ENCODE measurements at regions of chr1 and their contacts with region 1.

Region 1: GRCh38 chr1:24964811-24965570 is 34.9 kb upstream of the RUNX3 start:
- DNase-seq: peak; percentile 68 to 97 (median 80)
- ATAC-seq: peak; percentile 93
- H3K4me3 ChIP-seq: peak overlapping the region; percentile 55
- H3K4me3 Mint-ChIP-seq: peak overlapping the region; percentile 79
- H3K27ac ChIP-seq: peak overlapping the region; percentile 75 to 85
- H3K27ac Mint-ChIP-seq: peak overlapping the region; percentile 88
- H3K4me1 ChIP-seq: peaks cover 76% of the 10 kb centered on the region
- H3K4me1 Mint-ChIP-seq: peaks cover 63% of the 10 kb centered on the region
- H3K27me3 ChIP-seq: no peaks in the 10 kb centered on the region
- H3K27me3 Mint-ChIP-seq: no peaks in the 10 kb centered on the region
- CTCF ChIP-seq: no peak

Region 2: GRCh38 chr1:24919791-24920532 is 45.0 kb before region 1 on chr1:
- CTCF ChIA-PET with region 1: no interaction called
- POLR2A ChIA-PET with region 1: no interaction called
- intact Hi-C with region 1: no loop called
- DNase-seq: peak in 4 of 14 experiments; percentile 53 to 68 (median 54)
- ATAC-seq: no peak
- H3K4me3 ChIP-seq: peak overlapping the region; percentile 9
- H3K4me3 Mint-ChIP-seq: peak overlapping the region; percentile 68
- H3K27ac ChIP-seq: peak overlapping the region; percentile 7 to 57
- H3K27ac Mint-ChIP-seq: peak overlapping the region; percentile 98
- H3K4me1 ChIP-seq: peaks cover 97% of the 10 kb centered on the region
- H3K4me1 Mint-ChIP-seq: peaks cover 58% of the 10 kb centered on the region
- H3K27me3 ChIP-seq: no peaks in the 10 kb centered on the region
- H3K27me3 Mint-ChIP-seq: no peaks in the 10 kb centered on the region
- CTCF ChIP-seq: no peak

Region 3: DNA sequence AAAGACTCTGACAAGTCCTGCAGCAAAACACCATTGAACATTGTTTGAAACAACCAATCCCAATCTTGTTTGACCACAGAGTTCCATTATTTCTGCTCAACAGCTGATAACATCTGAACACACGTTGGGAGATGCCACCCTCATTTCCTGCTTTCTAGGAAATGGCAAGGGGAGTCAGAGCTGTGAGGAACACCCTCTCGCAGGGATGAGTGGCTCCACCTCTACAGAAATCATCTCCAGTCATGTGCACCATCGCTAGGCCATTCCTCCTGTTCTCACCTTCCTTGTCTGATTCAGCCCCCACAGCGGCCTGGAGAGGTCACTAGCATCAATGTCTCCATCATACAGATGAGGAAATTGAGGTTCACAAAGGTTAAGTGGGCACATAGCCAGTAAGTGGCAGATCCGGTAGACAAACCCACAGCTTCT is 12.6 kb before region 1 on chr1:
- CTCF ChIA-PET with region 1: interaction called, 8 read pairs
- POLR2A ChIA-PET with region 1: interaction called, 14 read pairs
- intact Hi-C with region 1: no loop called
- DNase-seq: peak in 5 of 14 experiments; percentile 34 to 77 (median 68)
- ATAC-seq: peak; percentile 17
- H3K4me3 ChIP-seq: no peak overlapping the region
- H3K4me3 Mint-ChIP-seq: peak overlapping the region; percentile 54
- H3K27ac ChIP-seq: no peak overlapping the region
- H3K27ac Mint-ChIP-seq: peak overlapping the region; percentile 19
- H3K4me1 ChIP-seq: peaks cover 54% of the 10 kb centered on the region
- H3K4me1 Mint-ChIP-seq: peaks cover 63% of the 10 kb centered on the region
- H3K27me3 ChIP-seq: no peaks in the 10 kb centered on the region
- H3K27me3 Mint-ChIP-seq: no peaks in the 10 kb centered on the region
- CTCF ChIP-seq: no peak

Region 4: DNA sequence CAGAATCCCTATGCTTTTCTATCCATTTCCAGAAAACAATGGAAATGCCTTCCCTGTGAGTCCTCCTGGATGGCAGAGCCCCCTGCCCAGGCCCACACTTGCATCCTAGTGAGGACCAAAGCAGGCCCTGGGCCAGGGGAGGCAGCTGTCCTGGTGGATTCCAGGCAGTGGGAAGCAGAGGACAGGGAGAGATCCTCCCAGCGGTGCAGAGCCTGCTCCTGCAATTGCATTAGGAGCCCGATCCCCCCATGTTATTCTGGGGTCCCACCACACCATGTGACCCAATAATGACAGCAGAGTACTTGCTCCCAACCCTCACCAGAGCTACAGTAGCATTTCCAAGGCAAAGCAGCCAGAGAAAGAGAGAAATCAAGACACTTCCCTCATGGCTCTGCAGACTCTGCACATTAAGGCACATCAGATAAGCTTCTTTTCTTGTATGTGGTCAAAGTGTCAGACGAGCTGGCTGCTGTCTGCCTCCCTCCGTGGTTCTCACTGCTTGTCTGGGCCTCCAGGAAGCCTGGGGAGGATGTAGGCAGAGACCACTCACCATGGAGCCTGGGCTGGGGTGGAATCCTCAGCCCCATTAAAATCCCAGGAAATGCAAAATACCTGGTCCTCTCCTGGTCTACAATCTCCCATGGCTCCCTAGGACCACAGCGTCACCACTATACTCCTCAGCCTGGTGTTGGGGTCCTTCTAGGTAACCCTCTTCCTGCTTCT is 20.0 kb after region 1 on chr1:
- CTCF ChIA-PET with region 1: interaction called, 4 read pairs
- POLR2A ChIA-PET with region 1: interaction called, 4 read pairs
- intact Hi-C with region 1: loop called in 1 of 2 experiments (anchors 1 kb)
- DNase-seq: peak in 7 of 14 experiments; percentile 35 to 83 (median 57)
- ATAC-seq: peak; percentile 54
- H3K4me3 ChIP-seq: no peak overlapping the region
- H3K4me3 Mint-ChIP-seq: peak overlapping the region; percentile 6
- H3K27ac ChIP-seq: no peak overlapping the region
- H3K27ac Mint-ChIP-seq: peak overlapping the region; percentile 19
- H3K4me1 ChIP-seq: peaks cover 95% of the 10 kb centered on the region
- H3K4me1 Mint-ChIP-seq: peaks cover 93% of the 10 kb centered on the region
- H3K27me3 ChIP-seq: no peaks in the 10 kb centered on the region
- H3K27me3 Mint-ChIP-seq: no peaks in the 10 kb centered on the region
- CTCF ChIP-seq: no peak

Region 5: DNA sequence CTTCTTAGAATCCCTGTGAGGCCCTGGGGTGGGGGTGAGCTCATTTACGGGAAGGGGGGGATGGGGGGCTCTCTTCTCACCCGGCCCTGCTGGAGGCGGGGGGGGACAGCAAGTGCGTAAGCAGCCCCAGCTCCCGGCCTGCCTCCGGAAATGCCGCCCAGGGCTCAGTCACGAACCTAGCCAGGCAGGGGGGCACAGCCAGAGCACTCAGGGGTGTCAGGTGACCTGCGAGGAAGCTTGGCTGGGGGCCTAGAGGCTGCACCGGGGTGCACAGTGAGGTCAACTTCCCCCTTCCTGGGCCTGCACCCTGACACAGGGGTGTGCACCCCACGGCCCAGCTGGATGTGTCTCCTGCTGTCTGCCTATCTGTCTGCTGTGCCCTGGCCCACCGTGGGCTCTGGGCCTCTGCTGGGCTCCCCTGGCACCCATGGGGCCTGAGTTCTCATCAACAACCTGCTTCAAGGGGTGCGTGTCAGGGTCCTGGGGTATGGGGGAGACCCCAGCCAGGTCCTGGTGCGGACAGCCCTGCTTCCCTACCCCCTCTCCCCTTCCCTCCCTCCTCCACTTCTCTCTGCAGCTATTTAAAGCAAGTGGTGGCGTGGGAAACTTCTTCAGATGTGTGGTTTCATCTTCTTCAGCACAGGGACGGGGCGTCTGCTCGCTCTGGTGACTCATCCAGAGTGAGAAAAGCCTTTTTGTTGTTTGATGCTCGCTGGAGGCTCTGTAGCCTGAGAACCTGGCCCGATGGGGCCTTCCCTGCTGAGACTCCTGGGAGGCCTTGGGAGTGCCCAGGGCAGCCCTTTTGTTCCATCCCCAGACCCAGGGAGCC is 57.6 kb after region 1 on chr1:
- CTCF ChIA-PET with region 1: interaction called, 6 read pairs
- POLR2A ChIA-PET with region 1: interaction called, 59 read pairs
- intact Hi-C with region 1: loop called in 1 of 2 experiments (anchors 2 kb)
- DNase-seq: peak; percentile 82 to 99 (median 95)
- ATAC-seq: peak; percentile 84
- H3K4me3 ChIP-seq: peak overlapping the region; percentile 37
- H3K4me3 Mint-ChIP-seq: peak overlapping the region; percentile 61
- H3K27ac ChIP-seq: peak overlapping the region; percentile 97 to 99
- H3K27ac Mint-ChIP-seq: peak overlapping the region; percentile 91
- H3K4me1 ChIP-seq: peaks cover 98% of the 10 kb centered on the region
- H3K4me1 Mint-ChIP-seq: peaks cover 72% of the 10 kb centered on the region
- H3K27me3 ChIP-seq: no peaks in the 10 kb centered on the region
- H3K27me3 Mint-ChIP-seq: no peaks in the 10 kb centered on the region
- CTCF ChIP-seq: no peak

Region 6: DNA sequence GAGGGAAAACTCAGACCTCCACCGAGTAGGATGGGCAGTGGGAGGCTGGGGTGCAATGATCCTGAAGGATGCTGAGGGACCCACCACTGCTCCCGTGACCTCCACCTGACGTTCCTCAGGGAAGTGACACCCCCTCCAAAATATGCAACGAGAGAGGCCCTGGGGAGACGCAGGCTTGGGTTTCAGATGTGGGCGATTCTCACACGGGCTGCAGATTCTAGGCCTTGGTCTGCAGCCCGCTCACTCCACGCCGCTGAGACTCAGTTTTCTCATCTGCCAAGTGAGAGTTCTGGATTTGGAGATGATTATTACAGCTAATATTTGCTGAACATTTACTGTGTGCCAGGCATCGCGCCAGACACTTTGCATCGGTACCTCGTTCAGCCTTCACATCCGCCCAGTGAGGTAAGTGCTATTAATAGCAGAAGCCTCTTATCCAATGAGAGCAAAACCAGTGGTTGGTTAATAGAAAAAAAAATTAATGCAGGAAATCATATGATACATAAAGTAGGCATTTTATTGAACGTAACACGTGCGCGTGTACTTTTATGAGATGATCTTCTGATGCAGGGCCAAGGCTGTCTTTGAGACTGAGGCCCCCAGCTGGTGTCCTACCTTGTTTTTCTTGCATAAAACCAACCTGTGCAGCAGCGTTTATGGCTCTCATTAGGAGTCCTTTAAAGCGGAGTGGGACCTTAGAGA is 67.1 kb after region 1 on chr1:
- CTCF ChIA-PET with region 1: interaction called, 31 read pairs
- POLR2A ChIA-PET with region 1: interaction called, 30 read pairs
- intact Hi-C with region 1: loop called (anchors 1 kb)
- DNase-seq: peak; percentile 43 to 94 (median 57)
- ATAC-seq: peak; percentile 76
- H3K4me3 ChIP-seq: no peak overlapping the region
- H3K4me3 Mint-ChIP-seq: peak overlapping the region; percentile 32
- H3K27ac ChIP-seq: peak overlapping the region; percentile 84
- H3K27ac Mint-ChIP-seq: peak overlapping the region; percentile 84
- H3K4me1 ChIP-seq: peaks cover 99% of the 10 kb centered on the region
- H3K4me1 Mint-ChIP-seq: peaks cover 71% of the 10 kb centered on the region
- H3K27me3 ChIP-seq: no peaks in the 10 kb centered on the region
- H3K27me3 Mint-ChIP-seq: no peaks in the 10 kb centered on the region
- CTCF ChIP-seq: no peak

Region 7: GRCh38 chr1:25037174-25038074 is 72.4 kb after region 1 on chr1:
- CTCF ChIA-PET with region 1: interaction called, 31 read pairs
- POLR2A ChIA-PET with region 1: interaction called, 30 read pairs
- intact Hi-C with region 1: loop called (anchors 1 kb)
- DNase-seq: peak; percentile 52 to 84 (median 63)
- ATAC-seq: peak; percentile 77
- H3K4me3 ChIP-seq: no peak overlapping the region
- H3K4me3 Mint-ChIP-seq: peak overlapping the region; percentile 4
- H3K27ac ChIP-seq: no peak overlapping the region
- H3K27ac Mint-ChIP-seq: peak overlapping the region; percentile 28
- H3K4me1 ChIP-seq: peaks cover 56% of the 10 kb centered on the region
- H3K4me1 Mint-ChIP-seq: peaks cover 30% of the 10 kb centered on the region
- H3K27me3 ChIP-seq: no peaks in the 10 kb centered on the region
- H3K27me3 Mint-ChIP-seq: no peaks in the 10 kb centered on the region
- CTCF ChIP-seq: peak; percentile 72

Region 8: DNA sequence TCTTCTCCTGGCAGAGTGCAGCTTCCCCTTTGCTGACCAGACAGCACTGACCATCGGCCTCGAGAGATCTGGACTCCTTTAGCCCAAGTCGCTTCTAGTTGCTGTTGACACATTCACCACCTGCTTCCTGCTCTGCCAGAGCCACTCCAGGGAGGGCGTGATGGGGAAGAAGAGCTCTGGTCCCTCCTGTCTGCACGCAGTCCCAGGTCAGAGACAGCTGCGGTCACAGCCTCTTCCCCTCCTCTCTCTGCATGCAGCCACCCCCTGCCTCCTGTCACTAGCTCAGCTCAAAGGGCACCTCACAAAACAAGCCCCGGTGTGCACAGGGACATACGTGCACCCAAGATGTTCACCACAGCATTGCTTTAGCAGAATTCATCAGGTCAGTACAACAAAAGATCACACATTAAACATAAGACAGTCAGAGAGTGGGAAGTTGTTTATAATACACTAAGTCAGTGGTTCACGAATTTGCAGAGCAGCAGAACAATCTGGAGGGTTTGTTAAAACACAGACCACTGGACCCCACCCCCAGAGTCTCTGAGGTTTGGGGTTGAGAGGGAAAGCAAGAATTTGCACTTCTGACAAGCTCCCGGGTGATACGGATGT is 134.5 kb after region 1 on chr1:
- CTCF ChIA-PET with region 1: interaction called, 3 read pairs
- POLR2A ChIA-PET with region 1: interaction called, 3 read pairs
- intact Hi-C with region 1: loop called in 1 of 2 experiments (anchors 5 kb)
- DNase-seq: peak in 8 of 14 experiments; percentile 6 to 74 (median 34)
- ATAC-seq: peak; percentile 55
- H3K4me3 ChIP-seq: no peak overlapping the region
- H3K4me3 Mint-ChIP-seq: peak overlapping the region; percentile 5
- H3K27ac ChIP-seq: no peak overlapping the region
- H3K27ac Mint-ChIP-seq: peak overlapping the region; percentile 24
- H3K4me1 ChIP-seq: peaks cover 66% of the 10 kb centered on the region
- H3K4me1 Mint-ChIP-seq: peaks cover 66% of the 10 kb centered on the region
- H3K27me3 ChIP-seq: no peaks in the 10 kb centered on the region
- H3K27me3 Mint-ChIP-seq: no peaks in the 10 kb centered on the region
- CTCF ChIP-seq: no peak